Heart left ventricle (tissue), 16 donors: ENCODE measurements at regions of chr22 and their contacts with region 1.

Region 1: GRCh38 chr22:26199667-26200066 is 30.4 kb downstream of the SEZ6L start:
- DNase-seq: no peak
- ATAC-seq: no peak
- H3K4me3 ChIP-seq: no peak overlapping the region
- H3K27ac ChIP-seq: no peak overlapping the region
- H3K4me1 ChIP-seq: no peaks in the 10 kb centered on the region
- H3K27me3 ChIP-seq: peaks cover 0 to 12% (median 0%) of the 10 kb centered on the region in 9 donors
- CTCF ChIP-seq: no peak
- POLR2A ChIP-seq: no peak

Region 2: GRCh38 chr22:26139310-26139709 is 60.4 kb before region 1 on chr22:
- intact Hi-C with region 1: no loop called
- DNase-seq: peak in 2 of 5 donors; percentile 8 to 20
- ATAC-seq: peak in 1 of 4 donors; percentile 42
- H3K4me3 ChIP-seq: no peak overlapping the region
- H3K27ac ChIP-seq: no peak overlapping the region
- H3K4me1 ChIP-seq: no peaks in the 10 kb centered on the region
- H3K27me3 ChIP-seq: peaks cover 0 to 30% (median 5%) of the 10 kb centered on the region in 9 donors
- CTCF ChIP-seq: no peak
- POLR2A ChIP-seq: no peak

Region 3: GRCh38 chr22:26267851-26268250 is 68.2 kb after region 1 on chr22:
- intact Hi-C with region 1: loop called in 1 of 10 experiments (anchors 10 kb)
- DNase-seq: no peak
- ATAC-seq: no peak
- H3K4me3 ChIP-seq: no peak overlapping the region
- H3K27ac ChIP-seq: no peak overlapping the region
- H3K4me1 ChIP-seq: no peaks in the 10 kb centered on the region
- H3K27me3 ChIP-seq: peaks cover 0 to 50% (median 5%) of the 10 kb centered on the region in 9 donors
- CTCF ChIP-seq: no peak
- POLR2A ChIP-seq: no peak